Transverse colon (tissue), 4 donors: ENCODE measurements at regions of chr6 and their contacts with region 1.

Region 1: DNA sequence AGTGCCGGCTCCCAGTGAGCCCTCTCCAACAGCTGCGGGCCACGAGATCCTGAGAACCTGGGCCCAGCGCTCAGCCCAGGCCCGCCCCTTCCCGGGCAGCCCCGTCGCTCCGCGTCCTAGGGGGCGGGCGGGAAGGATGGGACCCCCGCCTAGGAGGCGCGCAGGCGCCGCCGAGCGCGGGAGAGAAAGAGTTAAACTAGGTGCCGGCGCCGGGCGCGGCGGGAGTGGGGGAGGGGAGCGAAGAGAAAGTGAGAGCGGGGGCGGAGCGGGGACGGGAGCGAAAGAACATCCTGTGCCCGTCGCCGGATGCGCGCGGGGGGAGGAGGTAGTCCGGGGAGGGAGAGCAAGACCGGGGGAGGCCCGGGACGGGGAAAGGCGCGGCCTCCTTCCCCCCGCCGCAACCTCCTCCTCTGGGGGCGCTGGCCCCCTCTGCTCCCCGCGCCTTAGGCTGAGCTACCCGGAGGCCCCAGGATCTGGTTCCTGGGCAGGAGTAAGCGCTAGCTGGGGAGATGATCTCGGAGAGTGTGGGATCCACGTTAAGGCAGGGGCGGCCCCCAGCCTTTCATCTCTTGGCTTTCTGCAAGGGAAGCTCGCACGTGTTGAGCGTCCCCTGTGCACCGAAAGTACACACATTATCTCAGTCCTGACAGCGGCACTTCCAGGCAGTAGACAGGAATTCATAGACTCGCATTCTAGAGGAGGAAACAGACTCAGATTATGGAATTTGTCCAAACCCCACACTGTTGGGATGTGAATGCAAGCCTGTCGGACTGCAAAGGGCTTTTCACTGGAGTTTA is 4.9 kb upstream of the ARMC12 start:
- DNase-seq: peak; percentile 99
- H3K4me3 ChIP-seq: peak overlapping the region; percentile 50 to 63 (median 56)
- H3K27ac ChIP-seq: peak overlapping the region; percentile 99 to 100 (median 100)
- H3K4me1 ChIP-seq: peaks cover 57 to 89% (median 78%) of the 10 kb centered on the region in 4 donors
- H3K27me3 ChIP-seq: no peaks in the 10 kb centered on the region
- CTCF ChIP-seq: peak in 2 of 5 experiments; percentile 8 to 16
- EP300 ChIP-seq: peak; percentile 99
- POLR2A ChIP-seq: peak; percentile 65

Region 2: GRCh38 chr6:35522660-35523658 is 209.0 kb before region 1 on chr6:
- in situ Hi-C with region 1: loop called in 2 of 4 experiments (anchors 5 kb)
- intact Hi-C with region 1: no loop called
- DNase-seq: peak; percentile 74
- H3K4me3 ChIP-seq: no peak overlapping the region
- H3K27ac ChIP-seq: no peak overlapping the region
- H3K4me1 ChIP-seq: peaks cover 0 to 4% (median 0%) of the 10 kb centered on the region in 4 donors
- H3K27me3 ChIP-seq: no peaks in the 10 kb centered on the region
- CTCF ChIP-seq: peak; percentile 93 to 99 (median 99)
- EP300 ChIP-seq: no peak
- POLR2A ChIP-seq: no peak

Region 3: GRCh38 chr6:35583893-35584688 is 147.8 kb before region 1 on chr6:
- in situ Hi-C with region 1: loop called (anchors 5 to 10 kb)
- intact Hi-C with region 1: loop called (anchors 5 kb)
- DNase-seq: peak; percentile 76
- H3K4me3 ChIP-seq: no peak overlapping the region
- H3K27ac ChIP-seq: peak overlapping the region; percentile 7 to 45 (median 24)
- H3K4me1 ChIP-seq: peaks cover 6 to 42% (median 16%) of the 10 kb centered on the region in 4 donors
- H3K27me3 ChIP-seq: no peaks in the 10 kb centered on the region
- CTCF ChIP-seq: peak; percentile 70 to 79 (median 74)
- EP300 ChIP-seq: no peak
- POLR2A ChIP-seq: no peak

Region 4: GRCh38 chr6:35681298-35681697 is 50.6 kb before region 1 on chr6:
- in situ Hi-C with region 1: loop called in 1 of 4 experiments (anchors 5 kb)
- intact Hi-C with region 1: no loop called
- DNase-seq: no peak
- H3K4me3 ChIP-seq: no peak overlapping the region
- H3K27ac ChIP-seq: no peak overlapping the region
- H3K4me1 ChIP-seq: peaks cover 5 to 73% (median 27%) of the 10 kb centered on the region in 4 donors
- H3K27me3 ChIP-seq: no peaks in the 10 kb centered on the region
- CTCF ChIP-seq: no peak
- EP300 ChIP-seq: no peak
- POLR2A ChIP-seq: no peak

Region 5: DNA sequence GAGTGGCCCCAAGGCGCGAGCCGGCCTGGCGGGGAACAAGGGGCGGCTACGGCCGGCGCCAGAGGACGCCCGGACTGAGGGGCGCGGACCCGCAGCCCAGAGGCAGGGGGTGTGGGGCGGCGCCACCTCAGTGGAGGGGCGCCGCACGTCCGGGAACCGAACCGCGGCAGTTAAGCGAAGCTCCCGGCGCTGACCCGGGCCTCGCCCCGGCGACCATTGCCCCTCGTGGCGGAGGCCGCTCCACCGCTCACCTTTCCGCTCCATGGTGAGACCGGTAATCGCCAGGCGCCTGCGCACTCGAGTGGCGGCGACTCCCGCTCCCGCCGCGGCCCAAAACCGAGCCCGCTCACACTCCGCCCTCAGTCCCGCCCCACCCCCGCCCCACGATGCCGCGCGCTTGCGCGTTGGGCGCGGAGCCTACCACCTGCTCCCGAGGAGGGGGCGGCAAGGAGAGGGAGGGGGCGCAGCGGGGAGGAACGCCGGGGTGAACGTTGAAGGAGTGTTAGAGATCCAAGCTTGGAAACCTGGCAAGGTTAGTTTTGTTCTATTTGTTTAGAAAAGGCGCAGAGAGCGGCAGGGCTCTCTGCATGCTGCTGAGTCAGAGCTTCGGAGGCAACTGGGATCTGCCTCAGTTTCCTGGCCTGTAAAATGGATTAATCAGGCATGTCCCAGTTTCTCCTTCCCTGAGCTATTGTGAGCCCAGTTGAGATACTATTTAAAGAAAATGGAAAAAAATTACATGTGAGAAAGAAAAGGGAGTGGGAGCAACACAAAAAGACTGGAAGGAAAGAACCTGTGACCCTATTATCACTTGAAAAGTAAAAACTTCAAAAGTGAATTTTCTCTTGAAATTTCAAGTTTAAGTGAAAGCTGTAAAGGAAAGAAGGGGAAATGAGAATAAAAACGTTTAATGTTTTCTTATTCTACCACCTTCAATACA is 189.1 kb after region 1 on chr6 and contains the start of gene SRPK1:
- in situ Hi-C with region 1: no loop called
- intact Hi-C with region 1: no loop called
- DNase-seq: peak; percentile 94
- H3K4me3 ChIP-seq: peak within 1 kb of the TSS; percentile 93 to 98 (median 96)
- H3K27ac ChIP-seq: peak within 1 kb of the TSS; percentile 88 to 96 (median 92)
- H3K4me1 ChIP-seq: peaks cover 7 to 49% (median 39%) of the 10 kb centered on the region in 4 donors
- H3K27me3 ChIP-seq: no peaks in the 10 kb centered on the region
- CTCF ChIP-seq: no peak
- EP300 ChIP-seq: no peak
- POLR2A ChIP-seq: peak; percentile 81
- total RNA-seq, gene SRPK1: 107 to 155 (median 110) TPM

Region 6: GRCh38 chr6:36171573-36171972 is 439.6 kb after region 1 on chr6:
- in situ Hi-C with region 1: no loop called
- intact Hi-C with region 1: no loop called
- DNase-seq: no peak
- H3K4me3 ChIP-seq: no peak overlapping the region
- H3K27ac ChIP-seq: no peak overlapping the region
- H3K4me1 ChIP-seq: no peaks in the 10 kb centered on the region
- H3K27me3 ChIP-seq: no peaks in the 10 kb centered on the region
- CTCF ChIP-seq: no peak
- EP300 ChIP-seq: no peak
- POLR2A ChIP-seq: no peak